ENCODE measurements at regions of chr1 and their contacts with region 1.

Region 1: GRCh38 chr1:111234866-111235265 is 7.4 kb downstream of the CHI3L2 start:
- DNase-seq: no peak
- ATAC-seq: no peak
- H3K4me3 ChIP-seq: no peak overlapping the region
- H3K27ac ChIP-seq: no peak overlapping the region
- H3K4me1 ChIP-seq: no peaks in the 10 kb centered on the region
- H3K27me3 ChIP-seq: no peaks in the 10 kb centered on the region
- CTCF ChIP-seq: no peak
- POLR2A ChIP-seq: no peak

Region 2: GRCh38 chr1:110976089-110976488 is 258.8 kb before region 1 on chr1:
- intact Hi-C with region 1: no loop called
- DNase-seq: no peak
- ATAC-seq: no peak
- H3K4me3 ChIP-seq: no peak overlapping the region
- H3K27ac ChIP-seq: no peak overlapping the region
- H3K4me1 ChIP-seq: no peaks in the 10 kb centered on the region
- H3K27me3 ChIP-seq: peaks cover 0 to 5% of the 10 kb centered on the region in 2 donors
- CTCF ChIP-seq: no peak
- POLR2A ChIP-seq: no peak

Region 3: DNA sequence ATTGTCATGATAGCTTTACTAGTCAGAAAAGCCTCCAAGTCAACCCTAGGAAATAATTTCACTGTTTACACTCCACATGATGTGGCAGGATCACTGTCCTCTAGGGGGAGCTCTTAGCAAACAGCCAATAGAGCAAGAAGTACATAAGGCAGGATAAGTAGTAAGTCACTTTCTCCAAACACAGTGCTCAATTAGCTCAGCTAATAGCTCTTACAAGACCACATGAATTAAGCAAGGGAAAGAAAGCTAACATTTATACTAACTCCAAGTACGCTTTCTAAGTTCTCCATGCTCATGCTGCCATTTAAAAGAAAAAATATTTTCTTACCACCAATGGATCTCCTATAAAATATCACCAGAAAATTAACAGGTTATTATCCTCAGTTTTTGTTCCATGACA is 204.3 kb before region 1 on chr1:
- intact Hi-C with region 1: loop called in 1 of 2 experiments (anchors 10 kb)
- DNase-seq: no peak
- ATAC-seq: peak; percentile 65 to 72 (median 68)
- H3K4me3 ChIP-seq: no peak overlapping the region
- H3K27ac ChIP-seq: no peak overlapping the region
- H3K4me1 ChIP-seq: no peaks in the 10 kb centered on the region
- H3K27me3 ChIP-seq: no peaks in the 10 kb centered on the region
- CTCF ChIP-seq: peak; percentile 57 to 86 (median 83)
- POLR2A ChIP-seq: no peak

Region 4: DNA sequence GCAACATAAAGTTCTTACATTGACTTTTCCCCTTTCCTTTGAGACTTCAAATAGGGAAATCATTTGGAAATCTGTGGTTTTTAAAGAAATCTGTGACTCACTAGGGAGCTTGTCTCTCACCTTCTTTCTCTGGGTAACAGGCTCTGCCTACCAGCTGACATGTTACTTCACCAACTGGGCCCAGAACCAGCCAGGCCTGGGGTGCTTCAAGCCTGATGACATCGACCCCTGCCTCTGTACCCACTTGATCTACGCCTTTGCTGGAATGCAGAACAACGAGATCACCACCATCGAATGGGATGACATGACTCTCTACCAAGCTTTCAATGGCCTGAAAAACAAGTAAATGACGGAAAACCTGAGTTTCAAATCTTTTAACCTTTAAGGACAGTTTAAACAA is 46.5 kb after region 1 on chr1:
- intact Hi-C with region 1: no loop called
- DNase-seq: no peak
- ATAC-seq: no peak
- H3K4me3 ChIP-seq: no peak overlapping the region
- H3K27ac ChIP-seq: no peak overlapping the region
- H3K4me1 ChIP-seq: no peaks in the 10 kb centered on the region
- H3K27me3 ChIP-seq: no peaks in the 10 kb centered on the region
- CTCF ChIP-seq: no peak
- POLR2A ChIP-seq: no peak

Region 5: DNA sequence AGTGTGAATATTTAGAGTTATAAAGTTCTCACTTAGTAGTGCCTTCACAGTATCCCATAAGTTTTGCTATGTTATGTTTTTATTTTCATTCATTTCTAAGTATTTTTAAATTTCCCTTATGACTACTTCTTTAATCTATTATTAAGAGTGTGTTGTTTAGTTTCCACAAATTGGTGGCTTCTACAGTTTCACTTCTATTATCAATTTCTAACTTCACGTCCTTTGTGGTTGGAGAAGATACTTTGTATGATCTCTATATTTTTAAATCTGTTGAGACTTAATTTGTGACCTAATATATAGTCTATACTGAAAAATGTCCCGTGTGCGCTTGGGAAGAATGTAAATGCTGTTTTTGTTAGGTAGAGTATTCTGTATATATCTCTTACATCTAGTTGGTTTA is 67.5 kb after region 1 on chr1:
- intact Hi-C with region 1: no loop called
- DNase-seq: no peak
- ATAC-seq: no peak
- H3K4me3 ChIP-seq: no peak overlapping the region
- H3K27ac ChIP-seq: no peak overlapping the region
- H3K4me1 ChIP-seq: no peaks in the 10 kb centered on the region
- H3K27me3 ChIP-seq: no peaks in the 10 kb centered on the region
- CTCF ChIP-seq: no peak
- POLR2A ChIP-seq: no peak

Region 6: GRCh38 chr1:112133487-112133886 is 898.6 kb after region 1 on chr1:
- intact Hi-C with region 1: no loop called
- DNase-seq: no peak
- ATAC-seq: no peak
- H3K4me3 ChIP-seq: no peak overlapping the region
- H3K27ac ChIP-seq: no peak overlapping the region
- H3K4me1 ChIP-seq: no peaks in the 10 kb centered on the region
- H3K27me3 ChIP-seq: no peaks in the 10 kb centered on the region
- CTCF ChIP-seq: no peak
- POLR2A ChIP-seq: no peak

Measured in right lobe of liver (tissue), 6 donors.